ENCODE measurements at regions of chr6 and their contacts with region 1.

Region 1: DNA sequence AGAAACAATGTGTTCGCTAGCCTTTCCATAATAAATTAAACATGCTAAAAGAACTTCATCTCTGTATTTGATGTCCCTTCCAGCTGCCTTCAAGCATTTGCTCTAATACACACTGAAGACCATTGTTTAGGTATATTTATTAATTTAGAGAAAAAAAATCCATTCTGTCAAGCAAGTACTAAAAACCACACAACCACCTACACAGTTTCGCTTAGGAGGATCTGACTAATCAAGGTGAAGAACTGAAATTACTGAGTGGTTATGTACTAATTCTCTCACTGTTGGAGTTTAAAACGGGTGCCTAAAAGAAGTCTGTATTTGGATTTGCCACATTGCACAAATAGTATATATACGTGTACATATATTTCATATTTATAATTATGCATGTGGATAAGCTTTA is 58.9 kb downstream of the GMDS start:
- DNase-seq: no peak
- ATAC-seq: no peak
- H3K4me3 ChIP-seq: no peak overlapping the region
- H3K27ac ChIP-seq: no peak overlapping the region
- H3K4me1 ChIP-seq: peaks cover 0 to 5% of the 10 kb centered on the region in 2 experiments; a peak in 1 of 5 replicates
- H3K27me3 ChIP-seq: peaks cover 5 to 18% of the 10 kb centered on the region in 2 experiments; a peak in 3 of 5 replicates
- CTCF ChIP-seq: no peak
- EP300 ChIP-seq: no peak
- POLR2A ChIP-seq: no peak
- RAD21 ChIP-seq: no peak

Region 2: GRCh38 chr6:1609648-1610496 is 576.6 kb before region 1 on chr6 and contains the start of gene FOXC1:
- CTCF ChIA-PET with region 1: no interaction called
- POLR2A ChIA-PET with region 1: no interaction called
- in situ Hi-C with region 1: loop called (anchors 10 kb)
- intact Hi-C with region 1: no loop called
- DNase-seq: no peak
- ATAC-seq: no peak
- H3K4me3 ChIP-seq: no peak within 1 kb of the TSS
- H3K27ac ChIP-seq: no peak within 1 kb of the TSS
- H3K4me1 ChIP-seq: peaks cover 0 to 25% of the 10 kb centered on the region in 2 experiments; a peak in 2 of 5 replicates
- H3K27me3 ChIP-seq: peaks cover 38 to 49% of the 10 kb centered on the region in 2 experiments
- CTCF ChIP-seq: no peak
- EP300 ChIP-seq: no peak
- POLR2A ChIP-seq: no peak
- RAD21 ChIP-seq: no peak
- polyA plus RNA-seq, gene FOXC1: not detected

Region 3: GRCh38 chr6:2158596-2159271 is 27.8 kb before region 1 on chr6:
- CTCF ChIA-PET with region 1: no interaction called
- POLR2A ChIA-PET with region 1: no interaction called
- in situ Hi-C with region 1: no loop called
- intact Hi-C with region 1: no loop called
- DNase-seq: peak; percentile 75 to 79 (median 76)
- ATAC-seq: peak; percentile 100
- H3K4me3 ChIP-seq: no peak overlapping the region
- H3K27ac ChIP-seq: no peak overlapping the region
- H3K4me1 ChIP-seq: no peaks in the 10 kb centered on the region
- H3K27me3 ChIP-seq: peaks cover 0 to 3% of the 10 kb centered on the region in 2 experiments; a peak in 2 of 5 replicates
- CTCF ChIP-seq: peak; percentile 86 to 96 (median 89)
- EP300 ChIP-seq: no peak
- POLR2A ChIP-seq: no peak
- RAD21 ChIP-seq: peak; percentile 41 to 68

Measured in K562 (cell line).